AG04450 (cell line): ENCODE measurements at regions of chr1 and their contacts with region 1.

Region 1: DNA sequence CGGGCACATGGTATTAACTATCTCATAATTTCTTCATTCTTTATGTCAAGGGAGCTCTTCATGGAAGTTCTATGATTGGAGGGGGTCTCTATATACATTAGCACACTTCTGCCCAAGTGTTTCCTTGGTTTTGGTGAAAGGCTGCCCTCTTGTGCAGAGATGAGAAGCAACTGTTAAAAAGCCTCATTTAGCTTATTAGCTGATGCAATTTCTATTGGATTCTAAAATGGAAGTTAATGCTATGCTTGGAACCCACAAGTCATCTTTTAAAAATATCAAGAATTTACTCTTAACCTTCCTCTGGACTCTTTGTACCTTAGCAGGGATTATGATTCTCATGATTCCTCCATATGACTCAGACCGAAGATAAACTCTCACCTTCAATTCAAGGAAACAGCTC is 328.9 kb downstream of the PTBP2 start:
- DNase-seq: no peak
- H3K4me3 ChIP-seq: no peak overlapping the region
- H3K27ac ChIP-seq: no peak overlapping the region
- H3K27me3 ChIP-seq: no peaks in the 10 kb centered on the region
- CTCF ChIP-seq: peak; percentile 57

Region 2: GRCh38 chr1:96968541-96968940 is 82.0 kb before region 1 on chr1:
- CTCF ChIA-PET with region 1: interaction called, 12 read pairs
- POLR2A ChIA-PET with region 1: no interaction called
- DNase-seq: no peak
- H3K4me3 ChIP-seq: peak overlapping the region; percentile 21; the same call in 1 of the 2 replicates
- H3K27ac ChIP-seq: no peak overlapping the region
- H3K27me3 ChIP-seq: no peaks in the 10 kb centered on the region
- CTCF ChIP-seq: no peak

Region 3: DNA sequence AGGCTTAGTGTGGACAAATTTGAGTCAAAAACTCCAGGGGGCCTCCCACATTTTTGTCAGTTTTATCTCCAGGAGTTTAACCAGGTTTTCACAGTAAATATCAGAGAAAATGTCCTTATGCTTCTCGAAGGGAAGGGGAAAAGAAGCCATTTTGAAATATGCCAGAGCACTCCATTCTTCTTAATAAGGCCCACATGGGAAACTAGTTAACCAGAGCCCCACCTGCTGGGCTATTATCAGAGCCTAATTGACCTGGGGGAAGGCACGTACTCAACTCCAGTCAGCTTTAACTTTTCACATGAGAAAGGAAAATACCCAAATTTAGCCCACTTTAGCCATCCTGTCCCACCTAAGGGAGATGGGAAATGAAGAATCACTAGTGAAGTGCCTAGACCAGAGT is 32.6 kb before region 1 on chr1:
- CTCF ChIA-PET with region 1: no interaction called
- POLR2A ChIA-PET with region 1: no interaction called
- DNase-seq: no peak
- H3K4me3 ChIP-seq: no peak overlapping the region
- H3K27ac ChIP-seq: no peak overlapping the region
- H3K27me3 ChIP-seq: no peaks in the 10 kb centered on the region
- CTCF ChIP-seq: no peak